ENCODE measurements at regions of chr2 and their contacts with region 1.

Region 1: DNA sequence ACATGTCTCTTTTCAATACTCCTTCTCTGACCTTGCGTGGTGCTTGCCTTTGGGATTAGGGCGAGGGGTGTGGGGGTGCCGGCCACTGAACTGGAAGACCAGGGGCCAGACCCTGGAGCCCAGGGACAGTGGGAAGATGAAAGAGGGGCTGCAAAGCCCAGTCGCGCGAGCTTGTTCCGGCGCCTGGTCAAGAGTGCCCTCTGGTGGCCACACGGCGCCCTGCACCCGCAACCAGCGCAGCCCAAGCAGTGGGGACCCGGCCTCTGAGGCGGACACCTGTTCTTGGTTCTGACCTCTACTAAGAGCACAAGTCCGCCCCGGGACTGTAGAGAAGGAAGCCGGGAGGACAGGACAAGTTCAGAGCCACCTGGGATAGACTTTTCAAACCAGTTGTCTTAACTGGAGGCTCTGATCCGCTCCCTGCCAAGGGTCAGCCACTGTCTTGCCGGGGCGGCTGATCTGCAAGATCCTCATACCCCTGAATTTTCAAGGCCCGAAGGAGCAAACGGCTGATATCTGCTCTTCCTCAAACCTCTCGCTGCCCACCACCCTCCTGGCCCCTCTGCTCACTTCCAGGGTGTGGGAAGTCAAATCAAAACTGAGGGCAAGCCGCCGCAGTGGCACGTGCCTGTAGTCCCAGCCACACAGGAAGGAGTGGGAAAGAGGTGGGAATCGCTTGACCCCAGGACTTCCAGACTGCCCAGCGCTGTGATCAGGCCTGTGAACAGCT is 14.9 kb upstream of the MSH6 start:
- DNase-seq: peak in 1 of 2 donors; percentile 94
- H3K4me3 ChIP-seq: no peak overlapping the region
- CTCF ChIP-seq: peak in 2 of 3 donors; percentile 77 to 97
- POLR2A ChIP-seq: no peak

Region 2: DNA sequence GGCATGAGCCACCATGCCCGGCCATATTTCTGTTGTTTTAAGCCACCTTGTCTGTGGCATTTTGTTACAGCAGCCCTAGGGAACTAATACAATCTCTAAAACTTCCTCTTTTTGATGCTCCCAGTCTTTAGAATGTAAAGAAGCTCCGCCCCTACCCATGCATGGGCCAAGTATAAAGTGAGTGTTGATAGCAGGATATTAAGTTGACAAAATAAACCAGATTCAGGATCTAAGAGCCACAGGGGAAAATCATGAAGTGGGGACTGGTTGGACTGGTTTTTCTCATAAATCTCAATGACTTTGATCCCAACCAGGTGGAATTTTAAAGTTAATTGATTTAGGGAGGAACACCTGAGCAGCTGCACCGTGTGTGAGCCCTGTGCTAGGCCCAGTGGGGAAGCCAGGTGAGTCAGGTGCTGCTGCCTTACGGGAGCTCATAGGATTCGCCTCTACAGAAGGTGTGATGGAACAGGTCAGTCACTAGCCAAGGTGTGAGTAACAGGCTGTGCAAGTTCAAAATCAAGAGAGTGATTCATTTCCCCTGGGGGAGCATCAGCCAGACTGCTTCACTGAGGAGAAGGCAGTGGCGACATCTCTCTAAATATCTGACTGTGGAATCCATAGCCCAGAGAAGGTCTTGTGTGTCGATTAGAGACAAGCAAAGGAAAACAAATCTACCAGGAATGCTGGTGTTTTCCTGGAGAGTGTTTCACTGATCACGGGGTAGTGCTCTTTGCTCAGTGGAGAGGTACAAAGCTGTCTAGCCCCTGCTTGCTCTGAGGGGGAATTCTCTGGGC is 428.1 kb before region 1 on chr2:
- intact Hi-C with region 1: loop called (anchors 10 kb)
- DNase-seq: peak in 1 of 2 donors; percentile 74
- H3K4me3 ChIP-seq: no peak overlapping the region
- CTCF ChIP-seq: no peak
- POLR2A ChIP-seq: no peak

Region 3: GRCh38 chr2:47437287-47437686 is 330.8 kb before region 1 on chr2:
- intact Hi-C with region 1: loop called (anchors 5 kb)
- DNase-seq: no peak
- H3K4me3 ChIP-seq: no peak overlapping the region
- CTCF ChIP-seq: no peak
- POLR2A ChIP-seq: no peak